ENCODE measurements at regions of chr12 and their contacts with region 1.

Region 1: GRCh38 chr12:54759751-54760150 is 94.6 kb upstream of the MUCL1 start:
- DNase-seq: peak in 3 of 9 donors; percentile 14 to 45 (median 26)
- ATAC-seq: no peak
- H3K4me3 ChIP-seq: no peak overlapping the region
- H3K4me3 Mint-ChIP-seq: no peak overlapping the region
- H3K27ac ChIP-seq: no peak overlapping the region
- H3K27ac Mint-ChIP-seq: no peak overlapping the region
- H3K4me1 ChIP-seq: no peaks in the 10 kb centered on the region
- H3K4me1 Mint-ChIP-seq: peaks cover 0 to 20% (median 4%) of the 10 kb centered on the region in 7 donors
- H3K27me3 ChIP-seq: no peaks in the 10 kb centered on the region
- H3K27me3 Mint-ChIP-seq: peaks cover 0 to 24% (median 0%) of the 10 kb centered on the region in 5 donors

Region 2: DNA sequence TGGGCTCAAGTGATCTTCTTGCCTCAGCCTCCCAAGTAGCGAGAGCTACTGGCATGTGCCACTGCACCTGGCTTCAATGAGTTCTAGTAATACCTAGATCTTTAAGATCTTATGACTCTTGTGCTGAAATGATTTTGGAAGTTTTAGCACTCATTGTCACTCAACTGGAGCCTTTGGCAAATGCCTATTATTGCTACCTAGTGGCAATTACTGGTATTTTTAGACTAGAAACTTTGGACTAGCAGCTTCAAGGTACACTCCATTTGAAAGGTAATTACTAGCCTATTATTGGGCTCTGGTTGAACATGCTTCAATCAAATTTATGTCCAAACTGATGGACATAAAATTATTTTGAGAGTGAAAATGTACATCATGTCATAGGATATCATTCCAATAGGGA is 13.8 kb after region 1 on chr12:
- CTCF ChIA-PET with region 1: interaction called, 10 read pairs
- POLR2A ChIA-PET with region 1: interaction called, 3 read pairs
- intact Hi-C with region 1: no loop called
- DNase-seq: no peak
- ATAC-seq: no peak
- H3K4me3 ChIP-seq: no peak overlapping the region
- H3K4me3 Mint-ChIP-seq: no peak overlapping the region
- H3K27ac ChIP-seq: no peak overlapping the region
- H3K27ac Mint-ChIP-seq: no peak overlapping the region
- H3K4me1 ChIP-seq: peaks cover 0 to 4% of the 10 kb centered on the region in 2 donors
- H3K4me1 Mint-ChIP-seq: peaks cover 2 to 47% (median 40%) of the 10 kb centered on the region in 7 donors
- H3K27me3 ChIP-seq: no peaks in the 10 kb centered on the region
- H3K27me3 Mint-ChIP-seq: peaks cover 0 to 19% (median 3%) of the 10 kb centered on the region in 5 donors

Region 3: GRCh38 chr12:54853995-54854566 is 94.3 kb after region 1 on chr12 and contains the start of gene MUCL1:
- CTCF ChIA-PET with region 1: interaction called, 4 read pairs
- POLR2A ChIA-PET with region 1: no interaction called
- intact Hi-C with region 1: loop called in 1 of 2 experiments (anchors 1 kb)
- DNase-seq: peak; percentile 21 to 79 (median 73)
- ATAC-seq: peak; percentile 99
- H3K4me3 ChIP-seq: no peak within 1 kb of the TSS
- H3K4me3 Mint-ChIP-seq: no peak within 1 kb of the TSS
- H3K27ac ChIP-seq: no peak within 1 kb of the TSS
- H3K27ac Mint-ChIP-seq: peak within 1 kb of the TSS in 2 of 9 donors; percentile 44 to 70
- H3K4me1 ChIP-seq: no peaks in the 10 kb centered on the region
- H3K4me1 Mint-ChIP-seq: peaks cover 0 to 12% (median 5%) of the 10 kb centered on the region in 7 donors
- H3K27me3 ChIP-seq: no peaks in the 10 kb centered on the region
- H3K27me3 Mint-ChIP-seq: peaks cover 0 to 4% (median 0%) of the 10 kb centered on the region in 5 donors
- total RNA-seq, gene MUCL1: not detected

Measured in naive thymus-derived CD4-positive, alpha-beta T cell (primary cell).